Activated CD8-positive, alpha-beta T cell treated with anti-CD3 and anti-CD28 coated beads, Interleukin-2, amount 10 ng/mL, durations not matched to agents 7 days and 5 days (primary cell): ENCODE measurements at regions of chr2 and their contacts with region 1.

Region 1: DNA sequence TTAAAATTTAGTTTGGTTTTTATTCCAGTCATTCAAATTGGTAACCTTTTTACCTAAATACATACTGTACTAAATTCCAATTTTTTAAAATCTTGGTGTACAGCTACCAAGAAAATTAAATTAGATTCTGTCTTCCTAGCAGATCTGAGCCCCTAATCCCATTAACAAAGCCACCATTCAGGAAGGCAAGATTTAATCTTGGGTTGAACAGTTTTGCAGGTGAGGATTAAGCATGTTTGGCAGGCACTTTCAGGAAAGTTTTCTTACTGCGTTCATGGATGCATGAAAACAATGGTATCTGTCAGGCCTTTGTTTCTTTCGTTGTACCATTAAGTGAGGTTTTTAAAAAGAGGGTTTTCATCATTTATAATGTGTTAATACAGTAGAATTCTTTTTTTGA is 32.8 kb downstream of the ITPRID2 start:
- DNase-seq: no peak
- ATAC-seq: no peak
- H3K4me3 Mint-ChIP-seq: no peak overlapping the region
- H3K27ac Mint-ChIP-seq: no peak overlapping the region
- H3K4me1 Mint-ChIP-seq: no peaks in the 10 kb centered on the region
- H3K27me3 Mint-ChIP-seq: no peaks in the 10 kb centered on the region

Region 2: GRCh38 chr2:181953881-181954537 is 29.7 kb after region 1 on chr2:
- CTCF ChIA-PET with region 1: interaction called, 15 read pairs
- POLR2A ChIA-PET with region 1: no interaction called
- DNase-seq: peak; percentile 78
- ATAC-seq: peak; percentile 79
- H3K4me3 Mint-ChIP-seq: peak overlapping the region; percentile 54
- H3K27ac Mint-ChIP-seq: no peak overlapping the region
- H3K4me1 Mint-ChIP-seq: peaks cover 12% of the 10 kb centered on the region
- H3K27me3 Mint-ChIP-seq: peaks cover 13% of the 10 kb centered on the region

Region 3: DNA sequence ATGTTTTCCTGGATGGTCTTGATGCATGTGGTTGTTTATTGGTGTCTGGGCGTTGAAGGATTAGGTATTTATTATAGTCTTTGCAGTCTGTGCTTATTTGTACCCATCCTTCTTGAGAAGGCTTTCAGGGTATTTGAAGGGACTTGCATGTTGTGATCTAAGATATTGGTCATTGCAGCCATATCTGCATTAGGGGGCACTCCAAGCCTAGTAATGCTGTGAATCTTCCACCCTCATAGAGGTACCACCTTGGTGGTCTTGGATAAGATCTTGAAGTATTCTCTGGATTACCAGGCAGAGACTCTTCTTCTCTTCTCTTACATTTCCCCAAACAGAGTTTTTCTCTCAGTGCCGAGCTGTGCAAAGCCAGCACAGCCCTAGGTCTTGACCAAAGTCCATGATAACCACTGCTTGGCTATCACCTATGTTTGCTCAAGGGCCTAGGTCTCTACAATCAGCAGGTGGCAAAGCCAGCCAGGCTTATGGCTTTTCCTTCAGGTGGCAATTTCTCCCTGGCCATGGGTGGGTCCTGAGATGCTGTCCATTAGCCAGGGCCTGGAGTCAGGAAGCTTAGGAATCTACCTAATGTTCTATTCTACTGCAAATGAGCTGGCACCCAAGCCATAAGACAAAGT is 45.9 kb after region 1 on chr2:
- CTCF ChIA-PET with region 1: no interaction called
- POLR2A ChIA-PET with region 1: no interaction called
- DNase-seq: no peak
- ATAC-seq: no peak
- H3K4me3 Mint-ChIP-seq: no peak overlapping the region
- H3K27ac Mint-ChIP-seq: no peak overlapping the region
- H3K4me1 Mint-ChIP-seq: no peaks in the 10 kb centered on the region
- H3K27me3 Mint-ChIP-seq: peaks cover 11% of the 10 kb centered on the region

Region 4: GRCh38 chr2:182049372-182050148 is 125.2 kb after region 1 on chr2:
- CTCF ChIA-PET with region 1: no interaction called
- POLR2A ChIA-PET with region 1: no interaction called
- DNase-seq: no peak
- ATAC-seq: no peak
- H3K4me3 Mint-ChIP-seq: no peak overlapping the region
- H3K27ac Mint-ChIP-seq: no peak overlapping the region
- H3K4me1 Mint-ChIP-seq: no peaks in the 10 kb centered on the region
- H3K27me3 Mint-ChIP-seq: no peaks in the 10 kb centered on the region